Posterior vena cava (tissue), 2 donors: ENCODE measurements at regions of chr7 and their contacts with region 1.

Region 1: DNA sequence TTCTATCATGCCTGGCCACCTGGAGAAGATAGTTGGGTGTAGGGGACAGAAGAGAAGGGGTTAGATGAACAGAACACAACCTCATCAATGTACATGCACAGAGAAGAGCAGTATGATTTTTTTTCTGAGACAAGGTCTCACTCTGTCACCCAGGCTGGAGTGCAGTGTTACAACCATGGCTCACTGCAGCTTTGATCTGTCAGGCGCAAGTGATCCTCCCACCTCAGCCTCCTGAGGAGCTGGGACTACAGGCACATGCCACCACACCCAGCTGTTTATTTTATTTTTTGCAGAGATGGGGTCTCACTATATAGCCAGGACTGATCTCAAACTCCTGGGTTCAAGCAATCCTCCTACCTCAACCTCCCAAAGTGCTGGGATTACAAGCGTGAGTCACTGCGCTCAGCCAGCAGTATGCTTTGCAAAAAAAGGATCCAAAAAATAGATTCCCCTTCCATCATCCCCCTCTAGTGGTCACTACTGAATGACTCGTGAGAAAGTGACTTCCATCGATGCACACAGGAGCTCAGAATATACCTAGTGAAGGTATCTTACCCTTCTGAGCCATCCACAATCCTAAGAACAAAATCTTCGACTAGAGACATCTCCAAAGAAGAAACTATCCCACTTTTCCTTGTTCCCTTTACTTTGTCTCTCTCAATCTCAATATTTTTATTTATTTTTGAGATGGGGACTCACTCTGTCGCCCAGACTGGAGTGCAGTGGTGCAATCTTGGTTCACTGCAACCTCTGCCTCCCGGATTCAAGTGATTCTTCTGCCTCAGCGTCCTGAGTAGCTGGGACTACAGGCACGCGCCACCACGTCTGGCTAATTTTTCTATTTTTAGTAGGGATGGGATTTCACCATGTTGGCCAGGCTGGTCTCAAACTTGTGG is 21.0 kb downstream of the ZCWPW1 start:
- DNase-seq: no peak

Region 2: DNA sequence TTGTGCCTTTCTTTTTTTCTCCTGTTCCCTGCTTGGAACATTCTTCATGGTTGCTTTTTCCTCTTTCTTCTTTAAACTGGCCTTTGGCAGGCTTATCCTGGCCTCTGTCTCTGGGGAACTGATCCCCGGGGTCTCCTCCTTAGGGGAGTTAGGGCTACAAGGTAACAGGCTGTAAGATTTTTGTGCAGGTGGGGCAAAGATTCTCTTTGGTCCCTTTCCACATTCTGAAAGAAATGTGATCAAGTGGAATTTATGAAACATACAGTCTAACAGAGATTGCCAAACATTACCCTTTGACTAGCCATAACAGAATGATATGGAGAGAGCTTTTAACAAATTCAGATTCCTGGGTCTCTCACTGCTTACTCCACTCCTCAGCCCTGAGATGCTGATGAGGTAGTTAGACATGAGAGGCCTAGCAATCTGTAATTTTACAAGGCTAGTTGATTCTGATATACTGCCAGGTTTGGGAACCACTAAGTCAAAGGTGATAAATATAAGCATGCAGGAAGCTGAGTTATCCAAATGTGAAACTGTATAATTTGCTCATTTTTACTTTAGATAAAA is 12.2 kb after region 1 on chr7:
- intact Hi-C with region 1: loop called in 1 of 2 experiments (anchors 2 kb)
- DNase-seq: no peak

Region 3: DNA sequence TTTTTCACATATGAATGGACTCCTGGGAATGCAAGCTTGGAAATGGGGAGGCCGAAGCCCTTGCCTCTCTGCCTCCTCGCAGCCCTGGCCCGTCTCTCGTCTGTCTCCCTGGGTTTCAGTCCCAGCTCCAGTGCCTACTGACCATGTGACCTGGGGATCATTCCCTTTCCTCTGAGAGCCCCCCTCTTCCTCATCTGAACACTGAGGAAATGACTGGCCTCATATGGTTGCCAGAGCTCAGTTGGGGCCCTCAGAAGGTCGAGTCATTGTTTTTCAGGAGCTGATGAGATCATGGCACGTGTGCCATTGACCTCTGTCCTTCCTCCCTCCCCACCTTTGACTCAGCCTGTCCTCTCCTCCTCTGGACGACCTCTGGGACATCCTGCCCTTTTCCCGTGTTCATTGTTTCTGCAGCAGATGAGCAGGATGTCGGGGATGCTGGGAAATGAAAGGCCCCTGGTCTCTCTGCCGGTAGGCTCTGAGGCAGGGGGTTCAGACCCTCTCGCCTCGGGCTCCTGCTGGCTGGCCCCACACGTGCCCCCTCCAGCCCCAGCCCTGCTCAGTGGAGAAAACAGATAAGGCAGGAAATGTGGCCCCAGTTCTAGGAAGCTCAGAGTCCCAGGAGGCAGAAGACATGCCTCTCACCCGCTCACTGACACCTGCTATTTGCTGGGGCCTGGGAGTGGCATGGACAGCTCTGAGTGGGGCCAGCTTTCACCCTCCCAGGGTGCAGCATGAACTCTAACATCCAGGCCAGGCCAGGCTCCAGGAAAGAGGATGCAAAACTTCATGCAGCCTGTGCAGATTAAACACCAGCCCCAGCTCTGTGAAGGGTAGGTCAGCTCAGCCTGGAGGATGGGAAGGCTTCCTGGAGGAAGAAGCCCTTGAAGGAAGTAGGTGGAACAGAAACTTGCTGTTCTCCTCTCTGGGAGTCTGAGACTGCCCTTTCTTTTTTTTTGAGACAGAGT is 37.1 kb after region 1 on chr7:
- intact Hi-C with region 1: no loop called
- DNase-seq: peak; percentile 74

Region 4: DNA sequence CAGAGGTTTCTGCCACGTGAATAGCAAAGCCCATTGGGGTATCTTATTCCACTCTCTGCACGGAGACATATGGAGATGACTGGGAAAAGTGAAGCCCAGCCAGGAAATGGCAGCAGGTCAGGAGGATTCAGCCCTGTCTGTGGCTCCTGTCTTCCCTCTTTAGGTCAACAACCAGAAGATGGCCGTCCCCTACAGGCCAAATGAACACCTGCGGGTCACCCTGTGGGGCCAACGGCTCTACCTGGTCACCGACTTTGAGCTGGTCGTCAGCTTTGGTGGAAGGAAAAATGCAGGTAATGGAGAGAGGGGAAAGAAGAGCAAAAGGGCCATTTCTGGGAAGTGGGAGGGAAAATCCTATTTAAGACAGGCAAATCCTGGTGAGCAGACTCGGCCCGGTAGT is 381.5 kb after region 1 on chr7:
- intact Hi-C with region 1: no loop called
- DNase-seq: no peak

Region 5: DNA sequence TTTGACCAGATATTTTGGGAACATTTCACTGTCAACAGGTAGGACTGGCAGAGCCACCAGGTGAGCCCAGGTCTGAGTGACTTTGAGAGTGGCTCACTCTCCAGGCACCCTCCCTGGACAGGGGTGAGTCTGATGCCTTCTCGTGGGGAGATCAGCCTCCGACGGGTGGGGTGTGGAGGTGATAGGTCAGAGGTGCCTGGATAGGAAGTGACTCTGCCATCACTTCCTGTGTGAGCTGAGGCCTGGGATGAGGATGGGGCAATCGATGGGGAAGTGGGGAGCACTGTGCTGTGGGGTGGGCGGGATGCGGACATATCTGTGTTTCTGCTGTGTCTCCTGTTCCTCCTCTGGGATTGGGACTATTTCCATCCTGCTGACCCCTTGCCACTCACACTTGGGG is 879.5 kb after region 1 on chr7:
- intact Hi-C with region 1: no loop called
- DNase-seq: no peak